Aorta (tissue), 5 donors: ENCODE measurements at regions of chr2 and their contacts with region 1.

Region 1: GRCh38 chr2:185998562-185999070 is 260.0 kb downstream of the FSIP2 start:
- DNase-seq: no peak
- ATAC-seq: no peak
- H3K4me3 ChIP-seq: no peak overlapping the region
- H3K27ac ChIP-seq: no peak overlapping the region
- H3K4me1 ChIP-seq: no peaks in the 10 kb centered on the region
- H3K27me3 ChIP-seq: no peaks in the 10 kb centered on the region

Region 2: DNA sequence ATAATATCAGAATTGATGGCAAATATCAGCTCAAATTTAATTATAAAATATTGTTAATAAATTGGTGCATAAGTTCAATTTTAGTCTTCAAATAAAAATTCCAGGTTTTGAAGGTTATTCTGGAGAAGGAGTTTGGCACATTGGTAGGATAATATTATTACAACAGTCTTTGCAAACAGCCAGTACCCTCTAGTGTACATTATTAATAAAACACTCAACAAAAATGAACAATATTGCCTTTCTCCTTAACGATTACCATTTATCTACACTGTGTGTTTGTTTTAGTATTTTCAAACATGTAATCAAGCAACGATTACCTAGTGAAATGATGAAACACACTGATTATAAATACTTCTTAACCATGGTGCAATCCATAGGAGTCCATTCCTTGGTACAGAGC is 594.0 kb before region 1 on chr2:
- intact Hi-C with region 1: no loop called
- DNase-seq: no peak
- ATAC-seq: no peak
- H3K4me3 ChIP-seq: no peak overlapping the region
- H3K27ac ChIP-seq: no peak overlapping the region
- H3K4me1 ChIP-seq: no peaks in the 10 kb centered on the region
- H3K27me3 ChIP-seq: no peaks in the 10 kb centered on the region

Region 3: GRCh38 chr2:186017278-186017677 is 18.7 kb after region 1 on chr2:
- intact Hi-C with region 1: loop called in 1 of 2 experiments (anchors 2 kb)
- DNase-seq: no peak
- ATAC-seq: no peak
- H3K4me3 ChIP-seq: no peak overlapping the region
- H3K27ac ChIP-seq: no peak overlapping the region
- H3K4me1 ChIP-seq: no peaks in the 10 kb centered on the region
- H3K27me3 ChIP-seq: no peaks in the 10 kb centered on the region